IMR-90 (cell line): ENCODE measurements at regions of chr4 and their contacts with region 1.

Region 1: GRCh38 chr4:182555997-182556418 is 312.8 kb downstream of the TENM3 start:
- DNase-seq: peak; percentile 91
- ATAC-seq: peak; percentile 72
- H3K4me3 ChIP-seq: no peak overlapping the region
- H3K27ac ChIP-seq: peak overlapping the region; percentile 51; the same call in 1 of the 2 replicates
- H3K4me1 ChIP-seq: peaks cover 11% of the 10 kb centered on the region
- H3K27me3 ChIP-seq: no peaks in the 10 kb centered on the region
- CTCF ChIP-seq: no peak
- POLR2A ChIP-seq: no peak
- RAD21 ChIP-seq: no peak

Region 2: DNA sequence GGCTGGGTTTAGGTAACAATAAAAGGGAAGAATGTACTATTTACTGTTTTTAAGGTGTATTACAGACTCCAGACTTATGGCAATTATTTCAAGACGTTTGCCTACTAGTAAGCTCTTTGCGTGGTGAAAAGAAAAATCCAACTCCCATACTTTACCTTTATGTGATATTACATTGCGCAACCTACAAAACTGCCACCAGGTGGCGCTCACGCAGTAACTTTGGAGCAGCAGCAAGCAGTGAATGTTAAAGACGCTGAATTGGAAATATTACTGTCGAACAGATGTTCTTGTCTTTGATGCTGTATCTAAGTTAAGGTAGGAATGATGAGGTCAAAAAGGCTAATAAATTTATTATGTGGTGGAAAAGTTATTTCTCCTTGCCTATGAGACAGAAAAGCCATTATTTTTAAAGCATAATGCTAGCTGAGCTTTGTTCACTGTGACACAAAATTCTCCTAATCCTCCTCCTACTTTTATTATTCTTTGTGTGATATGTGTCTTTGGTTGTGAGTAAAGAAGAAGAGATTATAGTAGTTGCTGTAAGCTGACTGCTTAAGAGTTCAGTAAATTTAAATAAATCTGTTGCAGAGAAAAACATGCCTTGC is 1412.7 kb before region 1 on chr4:
- CTCF ChIA-PET with region 1: no interaction called
- POLR2A ChIA-PET with region 1: no interaction called
- dilution Hi-C with region 1: no loop called
- in situ Hi-C with region 1: no loop called
- intact Hi-C with region 1: loop called (anchors 5 kb)
- DNase-seq: peak; percentile 72
- ATAC-seq: peak; percentile 77
- H3K4me3 ChIP-seq: no peak overlapping the region
- H3K27ac ChIP-seq: no peak overlapping the region
- H3K4me1 ChIP-seq: no peaks in the 10 kb centered on the region
- H3K27me3 ChIP-seq: no peaks in the 10 kb centered on the region
- CTCF ChIP-seq: peak; percentile 91
- POLR2A ChIP-seq: no peak
- RAD21 ChIP-seq: peak; percentile 90

Region 3: GRCh38 chr4:181569553-181569952 is 986.5 kb before region 1 on chr4:
- CTCF ChIA-PET with region 1: no interaction called
- POLR2A ChIA-PET with region 1: no interaction called
- dilution Hi-C with region 1: no loop called
- in situ Hi-C with region 1: no loop called
- intact Hi-C with region 1: loop called (anchors 10 kb)
- DNase-seq: peak; percentile 65
- ATAC-seq: peak; percentile 92
- H3K4me3 ChIP-seq: no peak overlapping the region
- H3K27ac ChIP-seq: no peak overlapping the region
- H3K4me1 ChIP-seq: peaks cover 2% of the 10 kb centered on the region; the same call in 1 of the 2 replicates
- H3K27me3 ChIP-seq: no peaks in the 10 kb centered on the region
- CTCF ChIP-seq: peak; percentile 69
- POLR2A ChIP-seq: no peak
- RAD21 ChIP-seq: peak; percentile 79

Region 4: GRCh38 chr4:181952478-181952877 is 603.5 kb before region 1 on chr4:
- CTCF ChIA-PET with region 1: no interaction called
- POLR2A ChIA-PET with region 1: no interaction called
- dilution Hi-C with region 1: no loop called
- in situ Hi-C with region 1: no loop called
- intact Hi-C with region 1: loop called (anchors 10 kb)
- DNase-seq: peak; percentile 96
- ATAC-seq: peak; percentile 85
- H3K4me3 ChIP-seq: no peak overlapping the region
- H3K27ac ChIP-seq: peak overlapping the region; percentile 39
- H3K4me1 ChIP-seq: peaks cover 6% of the 10 kb centered on the region
- H3K27me3 ChIP-seq: no peaks in the 10 kb centered on the region
- CTCF ChIP-seq: no peak
- POLR2A ChIP-seq: no peak
- RAD21 ChIP-seq: no peak

Region 5: DNA sequence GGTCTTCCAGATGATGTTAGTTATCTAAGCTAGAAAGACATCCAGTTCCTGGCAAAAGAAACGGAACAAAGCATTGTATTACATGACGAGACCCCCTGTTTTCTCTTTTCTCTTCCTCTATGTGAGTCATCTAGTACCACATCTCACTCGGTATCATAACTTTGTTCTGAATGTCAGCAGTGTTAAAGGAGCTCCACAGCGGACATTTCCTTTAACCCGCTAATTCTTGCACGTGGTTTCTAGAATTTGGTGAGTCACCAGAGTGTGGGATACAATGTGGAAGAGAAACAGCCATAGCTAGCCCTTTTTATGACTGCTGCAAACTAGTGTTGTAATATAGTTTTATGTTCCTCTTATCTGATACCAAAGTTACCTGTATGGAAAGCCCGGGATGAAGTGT is 69.1 kb before region 1 on chr4:
- CTCF ChIA-PET with region 1: no interaction called
- POLR2A ChIA-PET with region 1: no interaction called
- dilution Hi-C with region 1: no loop called
- in situ Hi-C with region 1: no loop called
- intact Hi-C with region 1: loop called (anchors 5 kb)
- DNase-seq: no peak
- ATAC-seq: no peak
- H3K4me3 ChIP-seq: no peak overlapping the region
- H3K27ac ChIP-seq: no peak overlapping the region
- H3K4me1 ChIP-seq: peaks cover 3% of the 10 kb centered on the region
- H3K27me3 ChIP-seq: no peaks in the 10 kb centered on the region
- CTCF ChIP-seq: no peak
- POLR2A ChIP-seq: no peak
- RAD21 ChIP-seq: no peak

Region 6: DNA sequence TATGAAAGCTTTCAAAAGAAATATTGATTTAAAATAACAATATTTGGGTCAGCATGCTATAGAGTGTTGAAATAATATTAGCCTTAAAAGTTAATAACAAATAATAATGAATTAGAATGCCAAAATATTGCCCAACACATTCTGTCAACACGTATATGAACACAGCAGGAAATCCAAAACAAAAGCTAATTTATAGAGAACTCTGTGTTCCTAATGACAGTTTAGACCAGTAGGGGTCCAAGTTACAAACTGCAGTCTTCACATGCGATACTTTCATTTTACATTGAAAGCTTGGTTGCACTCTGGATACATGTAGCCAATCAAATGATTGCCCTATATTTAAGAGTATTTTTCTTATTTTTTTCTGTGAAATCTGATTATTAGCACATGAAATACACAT is 86.8 kb after region 1 on chr4:
- CTCF ChIA-PET with region 1: no interaction called
- POLR2A ChIA-PET with region 1: no interaction called
- dilution Hi-C with region 1: no loop called
- in situ Hi-C with region 1: no loop called
- intact Hi-C with region 1: loop called (anchors 5 kb)
- DNase-seq: peak; percentile 66
- ATAC-seq: peak; percentile 49; the same call in 1 of the 2 replicates
- H3K4me3 ChIP-seq: no peak overlapping the region
- H3K27ac ChIP-seq: no peak overlapping the region
- H3K4me1 ChIP-seq: peaks cover 4% of the 10 kb centered on the region
- H3K27me3 ChIP-seq: no peaks in the 10 kb centered on the region
- CTCF ChIP-seq: 0 out of 2 replicates have a peak, but pooled peaks have one; percentile 22
- POLR2A ChIP-seq: no peak
- RAD21 ChIP-seq: 0 out of 2 replicates have a peak, but pooled peaks have one; percentile 18

Region 7: DNA sequence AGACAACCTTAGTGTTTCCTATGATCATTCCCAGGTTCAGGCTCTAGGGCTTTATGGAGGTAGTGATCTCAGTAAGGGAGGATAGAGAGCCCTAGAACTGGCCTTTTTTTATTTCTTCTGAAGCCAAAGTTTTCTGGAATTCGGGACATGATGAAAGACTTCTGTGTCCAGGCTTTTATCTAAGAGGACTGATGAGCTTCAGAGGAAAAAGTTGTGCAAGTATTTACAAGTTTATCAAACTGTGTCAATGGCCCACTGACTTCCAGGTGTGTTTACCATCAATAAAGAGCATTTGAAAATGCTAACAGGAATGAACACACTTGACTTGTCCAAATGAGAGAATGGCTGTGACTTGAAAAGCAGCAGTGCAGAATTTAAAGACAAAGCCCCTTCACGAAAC is 106.5 kb after region 1 on chr4:
- CTCF ChIA-PET with region 1: no interaction called
- POLR2A ChIA-PET with region 1: no interaction called
- dilution Hi-C with region 1: no loop called
- in situ Hi-C with region 1: no loop called
- intact Hi-C with region 1: loop called (anchors 5 kb)
- DNase-seq: no peak
- ATAC-seq: no peak
- H3K4me3 ChIP-seq: no peak overlapping the region
- H3K27ac ChIP-seq: no peak overlapping the region
- H3K4me1 ChIP-seq: no peaks in the 10 kb centered on the region
- H3K27me3 ChIP-seq: no peaks in the 10 kb centered on the region
- CTCF ChIP-seq: no peak
- POLR2A ChIP-seq: no peak
- RAD21 ChIP-seq: no peak